ENCODE measurements at regions of chr6 and their contacts with region 1.

Region 1: DNA sequence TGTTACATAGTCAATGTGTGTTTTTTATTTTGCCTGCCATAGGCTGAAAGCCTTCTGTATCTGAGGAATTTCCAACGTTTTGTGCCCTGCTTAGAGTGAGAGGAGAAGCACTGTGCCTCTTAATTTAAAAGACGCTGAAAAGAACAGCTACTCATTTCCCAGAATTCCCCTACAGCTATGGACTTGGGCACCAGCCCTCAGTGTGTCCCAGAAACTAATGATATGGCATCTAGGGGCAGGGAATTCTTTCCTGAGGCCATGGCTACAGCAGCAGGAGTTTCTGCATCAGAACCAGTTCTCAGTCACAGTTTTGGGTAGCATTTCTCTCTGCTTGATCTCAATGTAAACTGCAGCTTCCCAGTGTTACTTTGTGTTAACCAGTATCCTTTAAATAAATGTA is 20.2 kb downstream of the OPN5 start:
- DNase-seq: no peak

Region 2: DNA sequence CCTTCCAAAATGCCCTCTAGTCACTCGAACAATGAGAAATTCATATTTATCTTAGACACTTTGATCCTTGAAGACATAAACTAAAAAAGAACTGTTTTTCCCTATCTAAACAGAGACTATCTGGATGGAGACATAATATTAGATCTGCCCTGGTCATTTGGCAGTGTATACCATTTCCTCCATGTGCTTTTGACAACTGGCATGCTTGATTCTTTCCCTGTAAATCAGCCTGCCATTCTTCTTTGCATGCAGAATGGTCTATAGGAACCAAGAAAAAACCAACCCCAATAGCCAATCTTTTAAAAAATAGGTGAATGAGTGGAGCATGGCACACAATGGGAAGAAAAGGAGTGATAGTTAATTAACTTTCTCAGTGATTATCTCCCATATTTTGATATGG is 73.6 kb after region 1 on chr6:
- intact Hi-C with region 1: loop called in 1 of 2 experiments (anchors 2 kb)
- DNase-seq: no peak

Region 3: DNA sequence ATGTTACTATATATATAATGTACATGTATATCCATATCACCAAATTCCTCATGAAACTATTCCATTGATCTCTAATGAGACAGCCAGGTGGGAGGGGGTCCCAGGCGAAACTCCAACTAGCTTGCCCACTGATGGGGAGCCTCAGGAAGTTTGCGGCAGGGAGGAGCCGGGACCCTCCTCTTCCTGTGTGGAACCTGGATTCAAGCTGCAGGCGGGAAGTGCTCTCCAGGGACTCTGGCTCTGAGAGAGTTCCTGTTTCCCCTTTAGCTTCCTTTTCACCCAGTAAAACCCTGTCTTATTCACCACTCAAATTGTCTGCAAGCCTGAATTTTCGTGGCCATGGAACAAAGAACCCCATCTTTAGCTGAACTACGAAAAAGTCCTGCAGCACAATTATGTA is 132.0 kb after region 1 on chr6:
- intact Hi-C with region 1: no loop called
- DNase-seq: peak; percentile 66